Mammary epithelial cell (primary cell): ENCODE measurements at regions of chr2 and their contacts with region 1.

Region 1: DNA sequence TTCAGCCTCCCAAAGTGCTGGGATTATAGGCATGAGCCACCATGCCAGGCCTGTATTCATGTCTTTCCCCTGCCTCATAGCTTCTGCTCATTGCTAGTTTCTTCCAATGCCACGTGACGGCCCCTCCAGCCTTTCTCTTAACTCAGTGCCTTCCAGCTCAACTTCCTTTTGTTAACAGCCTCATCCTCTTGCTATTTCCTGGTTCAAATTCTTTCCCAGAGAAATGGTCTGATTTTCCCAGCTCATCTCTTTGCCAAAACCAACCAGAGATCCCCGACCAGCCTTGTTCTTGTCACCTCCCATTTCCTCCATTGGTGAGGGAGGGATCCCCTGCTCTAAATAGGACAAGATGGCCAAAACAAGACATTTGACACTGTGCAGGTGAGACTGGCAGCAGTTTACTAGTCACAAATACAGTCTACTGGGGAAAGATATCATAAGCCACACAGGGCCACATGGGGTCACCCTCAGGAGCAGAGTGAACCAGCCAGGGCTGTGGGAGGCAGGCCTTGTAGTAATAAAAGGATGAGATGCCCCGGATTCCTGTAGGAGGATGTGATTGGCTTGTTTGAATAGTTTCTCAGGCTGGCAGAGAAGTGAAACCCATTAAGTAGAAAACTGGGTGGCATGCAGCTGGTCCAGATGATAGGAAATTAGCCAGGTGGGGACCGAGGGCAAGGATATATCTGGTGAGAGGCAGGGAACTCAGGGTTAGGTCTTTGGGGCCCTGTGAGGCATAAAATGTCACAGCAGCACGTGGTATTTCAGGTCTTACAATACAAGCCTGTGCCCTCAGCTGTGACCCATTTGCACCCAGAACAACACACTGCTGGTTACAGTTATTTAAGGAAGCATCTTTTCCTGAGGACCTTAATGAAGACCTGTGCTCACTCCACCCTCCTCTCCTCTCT is 6.4 kb downstream of the CD207 start:
- DNase-seq: no peak
- H3K4me3 ChIP-seq: no peak overlapping the region
- H3K27ac ChIP-seq: no peak overlapping the region
- H3K4me1 ChIP-seq: no peaks in the 10 kb centered on the region
- H3K27me3 ChIP-seq: peaks cover 5% of the 10 kb centered on the region
- CTCF ChIP-seq: no peak

Region 2: GRCh38 chr2:70748002-70748784 is 81.0 kb before region 1 on chr2:
- CTCF ChIA-PET with region 1: no interaction called
- dilution Hi-C with region 1: no loop called
- in situ Hi-C with region 1: no loop called
- intact Hi-C with region 1: no loop called
- DNase-seq: no peak
- H3K4me3 ChIP-seq: no peak overlapping the region
- H3K27ac ChIP-seq: no peak overlapping the region
- H3K4me1 ChIP-seq: no peaks in the 10 kb centered on the region
- H3K27me3 ChIP-seq: no peaks in the 10 kb centered on the region
- CTCF ChIP-seq: peak in 1 of 2 donors; percentile 23

Region 3: GRCh38 chr2:70759446-70759845 is 69.7 kb before region 1 on chr2:
- CTCF ChIA-PET with region 1: no interaction called
- dilution Hi-C with region 1: no loop called
- in situ Hi-C with region 1: no loop called
- intact Hi-C with region 1: no loop called
- DNase-seq: no peak
- H3K4me3 ChIP-seq: no peak overlapping the region
- H3K27ac ChIP-seq: no peak overlapping the region
- H3K4me1 ChIP-seq: no peaks in the 10 kb centered on the region
- H3K27me3 ChIP-seq: no peaks in the 10 kb centered on the region
- CTCF ChIP-seq: no peak

Region 4: DNA sequence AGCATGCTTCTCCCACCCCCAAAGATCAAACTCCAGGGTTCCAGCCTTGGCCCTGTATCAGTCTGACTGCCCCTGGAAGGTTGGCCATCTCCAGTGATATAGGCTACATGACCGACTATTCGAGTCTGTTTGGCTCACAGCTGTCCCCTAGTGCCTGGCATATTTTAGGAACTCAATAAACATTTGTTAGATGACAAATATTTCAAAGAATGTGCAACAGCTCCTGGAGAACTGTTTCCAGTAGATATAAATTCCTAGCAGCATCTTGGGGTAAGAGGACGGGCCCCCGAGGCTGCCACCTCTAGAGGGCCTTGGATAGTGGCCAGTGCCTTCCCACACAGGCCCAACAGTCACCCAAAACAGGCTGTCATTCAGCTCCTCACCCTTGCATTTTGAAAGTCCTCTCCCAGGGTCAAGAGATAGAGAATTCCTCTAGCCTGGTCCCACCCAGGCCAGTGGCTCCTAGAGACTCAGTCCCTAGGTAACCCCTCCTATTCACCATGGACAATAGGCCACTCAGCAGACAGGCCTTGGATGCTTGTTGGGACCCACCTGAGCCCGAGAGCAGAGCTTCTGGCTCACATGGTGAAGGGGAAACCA is 61.4 kb after region 1 on chr2:
- CTCF ChIA-PET with region 1: no interaction called
- dilution Hi-C with region 1: loop called (anchors 5 kb)
- in situ Hi-C with region 1: no loop called
- intact Hi-C with region 1: no loop called
- DNase-seq: no peak
- H3K4me3 ChIP-seq: no peak overlapping the region
- H3K27ac ChIP-seq: no peak overlapping the region
- H3K4me1 ChIP-seq: peaks cover 8% of the 10 kb centered on the region
- H3K27me3 ChIP-seq: peaks cover 49% of the 10 kb centered on the region
- CTCF ChIP-seq: no peak